Head of caudate nucleus (tissue), 42 donors: ENCODE measurements at regions of chr10 and their contacts with region 1.

Region 1: GRCh38 chr10:67520924-67521520 is 175.0 kb downstream of the CTNNA3 start:
- DNase-seq: peak in 40 of 42 donors; percentile 4 to 87 (median 62)

Region 2: DNA sequence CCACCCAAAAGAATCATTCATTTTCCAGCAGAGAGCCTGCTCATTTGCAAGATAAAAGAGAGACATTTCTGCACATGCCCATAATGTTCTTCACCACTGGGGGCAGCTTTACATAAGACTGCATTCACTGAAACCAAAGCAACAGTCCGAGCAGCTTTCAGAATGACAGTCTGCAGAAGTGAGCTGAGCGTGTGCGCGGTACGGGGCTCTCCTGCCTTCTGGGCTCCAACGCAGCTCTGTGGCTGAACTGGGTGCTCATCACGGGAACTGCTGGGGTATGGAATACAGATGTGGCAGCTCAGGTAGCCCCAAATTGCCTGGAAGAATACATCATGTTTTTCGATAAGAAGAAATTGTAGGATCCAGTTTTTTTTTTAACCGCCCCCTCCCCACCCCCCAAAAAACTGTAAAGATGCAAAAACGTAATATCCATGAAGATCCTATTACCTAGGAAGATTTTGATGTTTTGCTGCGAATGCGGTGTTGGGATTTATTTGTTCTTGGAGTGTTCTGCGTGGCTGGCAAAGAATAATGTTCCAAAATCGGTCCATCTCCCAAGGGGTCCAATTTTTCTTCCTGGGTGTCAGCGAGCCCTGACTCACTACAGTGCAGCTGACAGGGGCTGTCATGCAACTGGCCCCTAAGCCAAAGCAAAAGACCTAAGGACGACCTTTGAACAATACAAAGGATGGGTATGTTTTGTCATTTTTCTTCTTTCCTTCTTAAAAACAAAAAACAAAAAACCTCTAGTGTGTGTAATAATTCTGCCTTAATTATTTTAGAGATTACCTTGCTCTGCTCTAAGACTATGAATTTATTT is 594.9 kb before region 1 on chr10 and contains the start of gene LRRTM3:
- intact Hi-C with region 1: loop called (anchors 10 kb)
- DNase-seq: peak; percentile 51 to 93 (median 79)

Region 3: DNA sequence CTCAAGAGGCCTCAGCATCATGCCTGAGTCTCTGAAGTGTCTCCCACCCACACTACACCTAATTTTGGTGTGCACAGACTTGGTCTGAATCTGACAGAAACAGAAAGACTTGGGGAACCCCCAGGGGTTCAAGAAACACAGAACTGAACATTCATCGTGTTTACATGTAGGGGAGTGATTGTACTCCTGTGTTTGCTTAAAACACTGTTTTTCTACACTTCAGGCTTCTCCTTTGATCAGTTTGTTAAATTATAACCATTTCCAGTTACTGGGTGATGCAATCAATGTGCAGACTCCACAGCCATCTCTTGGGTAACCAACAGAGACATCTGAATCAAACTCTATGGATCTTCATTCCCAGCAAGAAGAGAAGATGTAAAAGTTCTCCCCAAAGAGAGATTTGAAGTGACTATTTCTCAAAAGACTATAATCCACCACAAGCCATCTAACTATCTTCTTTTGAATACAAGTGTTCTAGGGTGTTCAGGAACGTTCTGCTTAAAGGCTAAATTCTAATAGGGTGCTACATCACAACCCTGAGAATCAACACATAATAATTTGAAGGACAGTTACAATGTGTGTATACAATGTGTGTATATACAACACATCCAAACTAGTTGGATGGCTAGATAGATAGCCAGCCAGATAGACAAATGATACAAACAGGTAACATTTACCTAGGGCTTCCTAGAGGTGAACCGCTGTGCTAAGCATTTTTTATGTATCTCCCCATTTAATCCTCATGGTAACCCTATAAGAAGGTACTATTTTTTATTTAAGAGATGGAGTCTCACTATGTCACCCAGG is 282.8 kb after region 1 on chr10:
- intact Hi-C with region 1: no loop called
- DNase-seq: no peak